Transverse colon (tissue), 4 donors: ENCODE measurements at regions of chr20 and their contacts with region 1.

Region 1: GRCh38 chr20:35146920-35147574 is at the start of gene EDEM2:
- DNase-seq: peak; percentile 95
- H3K4me3 ChIP-seq: peak within 1 kb of the TSS; percentile 58 to 76 (median 70)
- H3K27ac ChIP-seq: peak within 1 kb of the TSS; percentile 81 to 93 (median 91)
- H3K4me1 ChIP-seq: peaks cover 7 to 22% (median 11%) of the 10 kb centered on the region in 4 donors
- H3K27me3 ChIP-seq: no peaks in the 10 kb centered on the region
- CTCF ChIP-seq: no peak
- EP300 ChIP-seq: no peak
- POLR2A ChIP-seq: peak; percentile 68
- total RNA-seq, gene EDEM2: 23.0 to 55.9 (median 30.4) TPM

Region 2: GRCh38 chr20:34680586-34681175 is 466.4 kb before region 1 on chr20:
- in situ Hi-C with region 1: no loop called
- intact Hi-C with region 1: no loop called
- DNase-seq: no peak
- H3K4me3 ChIP-seq: no peak overlapping the region
- H3K27ac ChIP-seq: no peak overlapping the region
- H3K4me1 ChIP-seq: peaks cover 4 to 19% (median 11%) of the 10 kb centered on the region in 4 donors
- H3K27me3 ChIP-seq: no peaks in the 10 kb centered on the region
- CTCF ChIP-seq: no peak
- EP300 ChIP-seq: no peak
- POLR2A ChIP-seq: no peak

Region 3: DNA sequence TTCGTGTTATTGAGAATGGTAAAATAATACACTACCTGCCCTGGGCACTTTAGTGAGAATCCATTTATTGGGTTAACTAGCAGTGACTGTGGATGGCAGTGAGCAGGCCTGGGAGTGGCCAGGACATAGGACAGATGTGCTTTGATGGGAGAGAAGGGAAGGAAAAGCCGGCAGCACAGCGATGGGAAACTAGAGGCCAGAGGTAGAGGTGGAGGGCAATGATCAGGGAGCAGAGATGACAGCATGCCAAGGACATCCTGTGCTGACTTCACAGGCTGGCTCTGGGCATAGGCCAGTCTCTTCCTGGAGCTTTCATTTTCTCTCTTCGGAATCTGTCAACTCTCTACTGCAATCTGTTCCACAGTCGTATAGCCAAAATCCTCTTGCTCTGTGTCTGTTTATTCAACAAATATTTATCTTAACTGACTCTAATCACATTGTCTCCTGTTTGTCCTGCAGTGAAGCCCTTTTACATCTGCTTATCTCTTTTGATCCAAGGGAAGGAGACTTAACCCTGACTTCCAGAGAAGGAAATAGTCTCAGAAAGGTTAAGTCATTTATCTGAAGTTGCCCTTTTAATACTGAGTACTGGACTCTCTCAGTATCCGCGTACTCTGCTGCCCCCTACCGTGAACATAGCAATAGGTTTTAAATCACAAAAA is 61.0 kb after region 1 on chr20:
- in situ Hi-C with region 1: loop called in 1 of 4 experiments (anchors 5 kb)
- intact Hi-C with region 1: loop called (anchors 1 kb)
- DNase-seq: peak; percentile 86
- H3K4me3 ChIP-seq: peak overlapping the region in 1 of 4 donors; percentile 22
- H3K27ac ChIP-seq: peak overlapping the region; percentile 58 to 83 (median 74)
- H3K4me1 ChIP-seq: peaks cover 3 to 13% (median 8%) of the 10 kb centered on the region in 4 donors
- H3K27me3 ChIP-seq: no peaks in the 10 kb centered on the region
- CTCF ChIP-seq: peak; percentile 71 to 89 (median 78)
- EP300 ChIP-seq: no peak
- POLR2A ChIP-seq: no peak

Region 4: DNA sequence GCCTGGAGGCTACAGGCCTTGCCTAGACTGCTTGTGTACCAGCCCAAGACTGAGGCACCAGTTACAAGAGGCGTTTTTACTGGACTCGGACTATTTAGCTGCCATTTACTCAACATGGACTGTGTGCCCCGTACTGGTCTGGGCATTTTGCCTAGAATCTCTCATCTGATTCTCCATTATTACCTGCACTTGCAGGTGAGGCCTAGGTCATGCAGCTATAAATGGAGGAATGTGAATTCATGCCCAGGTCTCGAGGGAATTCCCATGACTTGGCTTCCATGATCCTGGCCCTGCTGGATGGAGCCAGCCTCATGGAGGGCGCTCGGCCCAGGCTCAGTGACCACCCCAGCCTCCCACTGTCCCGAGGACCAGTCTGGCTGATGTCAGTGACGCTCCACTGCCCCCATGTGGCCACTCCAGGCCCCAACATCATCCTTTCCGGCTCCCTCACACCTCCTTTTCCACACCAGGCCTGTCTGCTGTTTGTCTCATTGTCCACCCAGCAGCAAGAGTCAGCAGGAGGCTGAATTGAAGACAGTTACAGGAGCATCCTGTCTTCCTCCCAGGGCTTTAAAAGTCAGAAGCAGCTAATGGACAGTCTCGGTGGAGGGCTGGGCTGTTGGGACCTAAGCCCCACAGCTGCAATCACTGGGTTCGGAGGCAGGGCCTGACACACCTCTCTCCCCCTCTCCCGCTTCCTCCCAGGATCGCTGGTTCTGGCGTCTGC is 122.2 kb after region 1 on chr20:
- in situ Hi-C with region 1: loop called in 1 of 4 experiments (anchors 10 kb)
- intact Hi-C with region 1: loop called (anchors 10 kb)
- DNase-seq: peak; percentile 65
- H3K4me3 ChIP-seq: no peak overlapping the region
- H3K27ac ChIP-seq: peak overlapping the region in 3 of 4 donors; percentile 1 to 25 (median 8)
- H3K4me1 ChIP-seq: peaks cover 0 to 15% (median 4%) of the 10 kb centered on the region in 4 donors
- H3K27me3 ChIP-seq: no peaks in the 10 kb centered on the region
- CTCF ChIP-seq: peak; percentile 65 to 75 (median 69)
- EP300 ChIP-seq: no peak
- POLR2A ChIP-seq: no peak

Region 5: DNA sequence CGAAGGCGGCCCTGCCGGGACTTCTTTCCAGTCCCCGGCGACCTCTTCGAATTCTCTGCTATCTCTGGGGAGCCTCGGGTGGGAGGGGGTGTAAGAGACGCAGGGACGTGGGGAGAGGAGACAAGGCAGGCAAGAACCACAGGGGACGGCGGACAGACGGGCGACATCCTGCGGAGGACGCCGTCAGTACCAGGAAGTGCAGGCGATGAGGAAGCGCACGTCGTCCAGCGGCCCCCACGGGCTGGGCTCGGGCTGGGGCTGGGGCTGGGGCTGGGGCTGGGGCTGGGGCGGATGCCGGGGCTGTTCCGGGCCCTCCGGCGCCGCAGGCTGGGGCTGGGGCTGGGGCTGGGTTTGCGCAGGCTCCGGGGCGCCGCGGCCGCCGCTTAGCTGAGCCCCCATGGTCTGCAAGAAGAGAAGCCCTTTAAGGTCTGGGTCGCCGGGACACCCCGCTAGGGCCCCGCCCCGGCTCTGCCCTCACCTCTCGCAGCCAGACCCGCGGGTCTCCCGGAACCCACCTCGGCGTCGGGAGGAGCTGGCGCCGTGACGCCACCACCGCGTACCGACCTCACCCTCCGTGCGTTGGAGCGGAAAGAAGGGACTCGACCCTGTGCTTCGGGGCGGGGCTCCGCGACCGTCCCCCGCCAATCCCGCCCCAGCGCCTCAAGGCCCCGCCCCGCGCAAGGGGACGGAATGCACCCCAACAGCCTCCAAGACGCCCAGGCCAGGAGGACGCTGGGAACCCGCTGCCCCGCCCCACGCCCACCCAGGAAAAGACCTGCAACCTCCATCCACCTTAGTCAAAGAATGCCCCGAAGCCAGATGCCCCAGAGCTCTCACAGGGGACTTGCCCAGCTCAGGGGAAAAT is 130.7 kb after region 1 on chr20 and contains the start of gene MMP24OS:
- in situ Hi-C with region 1: no loop called
- intact Hi-C with region 1: loop called (anchors 10 kb)
- DNase-seq: peak; percentile 94
- H3K4me3 ChIP-seq: peak within 1 kb of the TSS; percentile 53 to 90 (median 75)
- H3K27ac ChIP-seq: peak within 1 kb of the TSS; percentile 97 to 100 (median 97)
- H3K4me1 ChIP-seq: peaks cover 8 to 24% (median 21%) of the 10 kb centered on the region in 4 donors
- H3K27me3 ChIP-seq: no peaks in the 10 kb centered on the region
- CTCF ChIP-seq: peak in 4 of 5 experiments; percentile 13 to 41 (median 26)
- EP300 ChIP-seq: no peak
- POLR2A ChIP-seq: peak; percentile 96
- total RNA-seq, gene MMP24OS: 32.4 to 81.1 (median 47.9) TPM

Region 6: GRCh38 chr20:35447082-35447789 is 300.2 kb after region 1 on chr20:
- in situ Hi-C with region 1: loop called in 2 of 4 experiments (anchors 25 kb)
- intact Hi-C with region 1: loop called (anchors 10 kb)
- DNase-seq: peak; percentile 93
- H3K4me3 ChIP-seq: peak overlapping the region in 3 of 4 donors; percentile 28 to 49 (median 34)
- H3K27ac ChIP-seq: no peak overlapping the region
- H3K4me1 ChIP-seq: peaks cover 0 to 6% (median 2%) of the 10 kb centered on the region in 4 donors
- H3K27me3 ChIP-seq: peaks cover 8% of the 10 kb centered on the region
- CTCF ChIP-seq: peak; percentile 91 to 96 (median 93)
- EP300 ChIP-seq: no peak
- POLR2A ChIP-seq: no peak